ENCODE measurements at regions of chr11 and their contacts with region 1.

Region 1: GRCh38 chr11:35082321-35083182 is 56.4 kb upstream of the CD44 start:
- DNase-seq: peak; percentile 37 to 81
- H3K4me3 ChIP-seq: no peak overlapping the region
- H3K27ac ChIP-seq: peak overlapping the region; percentile 67 to 69
- H3K4me1 ChIP-seq: peaks cover 13 to 42% of the 10 kb centered on the region in 2 donors
- H3K27me3 ChIP-seq: no peaks in the 10 kb centered on the region
- CTCF ChIP-seq: no peak

Region 2: DNA sequence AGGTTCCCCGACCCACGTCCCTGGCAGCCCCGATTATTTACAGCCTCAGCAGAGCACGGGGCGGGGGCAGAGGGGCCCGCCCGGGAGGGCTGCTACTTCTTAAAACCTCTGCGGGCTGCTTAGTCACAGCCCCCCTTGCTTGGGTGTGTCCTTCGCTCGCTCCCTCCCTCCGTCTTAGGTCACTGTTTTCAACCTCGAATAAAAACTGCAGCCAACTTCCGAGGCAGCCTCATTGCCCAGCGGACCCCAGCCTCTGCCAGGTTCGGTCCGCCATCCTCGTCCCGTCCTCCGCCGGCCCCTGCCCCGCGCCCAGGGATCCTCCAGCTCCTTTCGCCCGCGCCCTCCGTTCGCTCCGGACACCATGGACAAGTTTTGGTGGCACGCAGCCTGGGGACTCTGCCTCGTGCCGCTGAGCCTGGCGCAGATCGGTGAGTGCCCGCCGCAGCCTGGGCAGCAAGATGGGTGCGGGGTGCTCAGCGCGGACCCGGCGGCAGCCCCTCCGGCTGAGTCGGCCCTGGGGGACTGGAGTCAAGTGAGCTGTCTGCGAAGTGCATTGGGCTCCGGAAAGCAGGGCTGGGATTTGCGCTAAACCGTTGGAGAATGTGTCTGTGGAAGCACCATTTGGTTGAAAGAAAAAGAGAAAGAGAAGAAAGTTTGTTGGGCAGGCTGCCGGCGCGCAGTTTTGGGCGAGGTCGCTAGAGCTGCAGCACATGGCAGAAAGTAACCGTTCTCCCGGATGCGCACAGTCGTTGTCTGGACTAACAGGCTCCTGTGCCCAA is 56.6 kb after region 1 on chr11 and contains the start of gene CD44:
- intact Hi-C with region 1: loop called (anchors 5 kb)
- DNase-seq: peak; percentile 74 to 93
- H3K4me3 ChIP-seq: peak within 1 kb of the TSS; percentile 70 to 83
- H3K27ac ChIP-seq: peak within 1 kb of the TSS; percentile 90 to 98
- H3K4me1 ChIP-seq: peaks cover 11 to 27% of the 10 kb centered on the region in 2 donors
- H3K27me3 ChIP-seq: no peaks in the 10 kb centered on the region
- CTCF ChIP-seq: peak in 1 of 3 experiments; percentile 9
- total RNA-seq, gene CD44: 188 TPM

Region 3: GRCh38 chr11:35815556-35816315 is 733.2 kb after region 1 on chr11:
- intact Hi-C with region 1: no loop called
- DNase-seq: no peak
- H3K4me3 ChIP-seq: no peak overlapping the region
- H3K27ac ChIP-seq: no peak overlapping the region
- H3K4me1 ChIP-seq: no peaks in the 10 kb centered on the region
- H3K27me3 ChIP-seq: no peaks in the 10 kb centered on the region
- CTCF ChIP-seq: no peak